Mammary epithelial cell (primary cell): ENCODE measurements at regions of chr2 and their contacts with region 1.

Region 1: GRCh38 chr2:133561045-133561852 is 7.0 kb downstream of the NCKAP5 start:
- DNase-seq: peak; percentile 41
- H3K4me3 ChIP-seq: no peak overlapping the region
- H3K27ac ChIP-seq: no peak overlapping the region
- H3K4me1 ChIP-seq: no peaks in the 10 kb centered on the region
- H3K27me3 ChIP-seq: no peaks in the 10 kb centered on the region
- CTCF ChIP-seq: peak; percentile 58 to 70

Region 2: GRCh38 chr2:132267105-132267497 is 1294.1 kb before region 1 on chr2:
- CTCF ChIA-PET with region 1: no interaction called
- dilution Hi-C with region 1: no loop called
- in situ Hi-C with region 1: no loop called
- intact Hi-C with region 1: loop called (anchors 5 kb)
- DNase-seq: no peak
- H3K4me3 ChIP-seq: no peak overlapping the region
- H3K27ac ChIP-seq: no peak overlapping the region
- H3K4me1 ChIP-seq: peaks cover 4% of the 10 kb centered on the region
- H3K27me3 ChIP-seq: no peaks in the 10 kb centered on the region
- CTCF ChIP-seq: no peak

Region 3: GRCh38 chr2:133266041-133266925 is 295.0 kb before region 1 on chr2:
- CTCF ChIA-PET with region 1: interaction called, 24 read pairs
- dilution Hi-C with region 1: no loop called
- in situ Hi-C with region 1: loop called (anchors 25 kb)
- intact Hi-C with region 1: loop called (anchors 1 kb)
- DNase-seq: peak; percentile 33
- H3K4me3 ChIP-seq: peak overlapping the region in 2 of 3 experiments; percentile 57
- H3K27ac ChIP-seq: no peak overlapping the region
- H3K4me1 ChIP-seq: peaks cover 13% of the 10 kb centered on the region
- H3K27me3 ChIP-seq: no peaks in the 10 kb centered on the region
- CTCF ChIP-seq: peak in 1 of 2 donors; percentile 25

Region 4: GRCh38 chr2:133346654-133347053 is 214.6 kb before region 1 on chr2:
- CTCF ChIA-PET with region 1: no interaction called
- dilution Hi-C with region 1: no loop called
- in situ Hi-C with region 1: no loop called
- intact Hi-C with region 1: loop called (anchors 10 kb)
- DNase-seq: peak; percentile 90
- H3K4me3 ChIP-seq: no peak overlapping the region
- H3K27ac ChIP-seq: no peak overlapping the region
- H3K4me1 ChIP-seq: no peaks in the 10 kb centered on the region
- H3K27me3 ChIP-seq: no peaks in the 10 kb centered on the region
- CTCF ChIP-seq: no peak

Region 5: GRCh38 chr2:133780099-133780839 is 219.0 kb after region 1 on chr2:
- CTCF ChIA-PET with region 1: no interaction called
- dilution Hi-C with region 1: no loop called
- in situ Hi-C with region 1: no loop called
- intact Hi-C with region 1: loop called (anchors 5 kb)
- DNase-seq: peak; percentile 70
- H3K4me3 ChIP-seq: no peak overlapping the region
- H3K27ac ChIP-seq: no peak overlapping the region
- H3K4me1 ChIP-seq: no peaks in the 10 kb centered on the region
- H3K27me3 ChIP-seq: no peaks in the 10 kb centered on the region
- CTCF ChIP-seq: peak; percentile 81